ENCODE measurements at regions of chr12 and their contacts with region 1.

Region 1: DNA sequence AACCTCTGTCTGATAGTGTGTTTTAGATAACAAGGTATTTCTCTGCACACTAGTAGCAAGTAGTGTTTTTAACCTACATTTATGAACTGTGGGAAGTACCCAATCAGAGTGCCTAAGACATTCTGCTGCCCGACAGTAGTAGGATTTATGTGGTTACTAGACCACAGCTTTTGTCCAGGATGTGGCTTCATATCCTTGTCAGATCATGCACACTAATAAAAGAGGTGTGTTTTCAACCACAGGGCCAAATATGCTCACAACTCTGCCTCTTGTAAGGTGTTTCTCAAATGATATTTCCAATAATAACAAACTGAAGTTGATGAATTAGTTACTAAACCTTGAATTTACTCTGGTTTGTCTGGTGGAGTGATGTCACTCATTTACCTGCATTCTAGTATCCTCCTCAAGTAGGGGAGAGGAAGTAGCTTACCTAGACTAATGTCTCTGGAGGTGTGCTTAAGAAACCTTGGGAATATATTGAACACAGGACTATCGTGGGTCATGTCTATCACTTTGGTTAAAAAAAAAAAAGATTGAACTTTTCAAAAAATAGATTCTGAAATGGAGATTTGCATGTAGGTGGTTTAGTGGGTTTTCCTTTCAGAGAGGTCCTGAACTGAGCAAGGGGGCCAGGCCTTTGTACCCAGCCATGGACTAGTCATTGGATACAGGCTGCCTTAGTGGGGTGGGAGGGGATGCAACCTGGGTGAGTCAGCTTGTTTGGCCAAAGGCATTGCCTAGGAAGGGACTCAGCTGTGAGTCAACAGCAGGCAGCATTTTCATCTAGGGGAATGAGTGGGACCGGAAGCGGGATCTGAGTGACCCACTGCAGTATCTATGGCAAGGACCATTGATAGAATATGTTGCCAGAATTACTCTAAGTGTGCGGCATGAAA is 14.1 kb downstream of the FBXW8 start:
- DNase-seq: peak in 8 of 9 donors; percentile 46 to 86 (median 80)
- ATAC-seq: peak; percentile 96
- H3K4me3 ChIP-seq: peak overlapping the region; percentile 21
- H3K4me3 Mint-ChIP-seq: peak overlapping the region; percentile 27 to 82 (median 77)
- H3K27ac ChIP-seq: no peak overlapping the region
- H3K27ac Mint-ChIP-seq: peak overlapping the region; percentile 40 to 82 (median 62)
- H3K4me1 ChIP-seq: peaks cover 26 to 59% of the 10 kb centered on the region in 2 donors
- H3K4me1 Mint-ChIP-seq: peaks cover 51 to 86% (median 70%) of the 10 kb centered on the region in 7 donors
- H3K27me3 ChIP-seq: no peaks in the 10 kb centered on the region
- H3K27me3 Mint-ChIP-seq: peaks cover 0 to 8% (median 0%) of the 10 kb centered on the region in 5 donors

Region 2: DNA sequence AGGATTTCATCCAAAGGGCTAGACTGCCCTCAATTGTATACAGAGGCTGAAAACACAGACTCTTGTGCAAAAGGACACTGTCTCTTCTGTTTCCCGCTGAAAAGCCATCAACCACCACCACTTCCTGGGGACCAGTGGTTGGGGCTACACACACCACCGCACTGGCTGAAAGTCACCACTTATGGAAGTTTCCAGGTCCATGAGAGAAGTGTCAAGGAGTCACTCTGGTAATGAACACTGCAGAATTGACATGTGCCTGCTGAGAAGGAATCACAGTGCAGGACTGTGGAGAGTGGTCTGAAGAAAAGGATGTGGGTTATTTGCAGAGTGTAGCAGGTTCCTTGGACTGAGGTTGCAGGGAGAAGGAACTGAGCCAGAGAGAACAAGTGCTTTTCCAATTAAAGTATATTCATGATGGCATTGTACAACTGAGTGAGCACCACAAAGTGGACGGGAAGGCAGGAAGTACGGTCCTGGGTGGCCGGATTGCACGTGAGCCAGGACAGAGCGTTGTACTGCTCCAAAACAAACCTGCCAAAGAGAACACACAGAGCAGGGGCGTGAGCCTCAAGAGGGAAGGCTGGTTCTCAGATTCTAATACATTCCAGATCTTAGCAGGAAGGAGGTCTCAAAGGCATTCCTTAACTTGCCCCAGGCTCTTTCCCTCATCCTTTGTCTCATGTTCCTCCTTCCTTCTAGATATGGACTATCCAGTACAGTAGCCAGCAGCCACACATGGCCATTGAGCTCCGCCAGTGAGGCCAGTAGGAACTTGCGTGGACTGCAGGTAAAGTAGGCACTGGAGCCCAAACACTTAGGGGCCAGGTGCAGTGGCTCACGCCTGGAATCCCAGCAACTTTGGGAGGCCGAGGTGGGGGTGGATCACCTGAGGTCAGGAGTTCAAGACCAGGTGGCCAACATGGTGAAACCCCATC is 963.7 kb before region 1 on chr12:
- CTCF ChIA-PET with region 1: no interaction called
- POLR2A ChIA-PET with region 1: no interaction called
- intact Hi-C with region 1: loop called in 1 of 2 experiments (anchors 10 kb)
- DNase-seq: peak in 1 of 9 donors; percentile 32
- ATAC-seq: no peak
- H3K4me3 ChIP-seq: no peak overlapping the region
- H3K4me3 Mint-ChIP-seq: peak overlapping the region in 2 of 10 donors; percentile 5 to 10
- H3K27ac ChIP-seq: no peak overlapping the region
- H3K27ac Mint-ChIP-seq: peak overlapping the region in 4 of 9 donors; percentile 29 to 76 (median 72)
- H3K4me1 ChIP-seq: no peaks in the 10 kb centered on the region
- H3K4me1 Mint-ChIP-seq: peaks cover 0 to 59% (median 0%) of the 10 kb centered on the region in 7 donors
- H3K27me3 ChIP-seq: no peaks in the 10 kb centered on the region
- H3K27me3 Mint-ChIP-seq: no peaks in the 10 kb centered on the region

Region 3: DNA sequence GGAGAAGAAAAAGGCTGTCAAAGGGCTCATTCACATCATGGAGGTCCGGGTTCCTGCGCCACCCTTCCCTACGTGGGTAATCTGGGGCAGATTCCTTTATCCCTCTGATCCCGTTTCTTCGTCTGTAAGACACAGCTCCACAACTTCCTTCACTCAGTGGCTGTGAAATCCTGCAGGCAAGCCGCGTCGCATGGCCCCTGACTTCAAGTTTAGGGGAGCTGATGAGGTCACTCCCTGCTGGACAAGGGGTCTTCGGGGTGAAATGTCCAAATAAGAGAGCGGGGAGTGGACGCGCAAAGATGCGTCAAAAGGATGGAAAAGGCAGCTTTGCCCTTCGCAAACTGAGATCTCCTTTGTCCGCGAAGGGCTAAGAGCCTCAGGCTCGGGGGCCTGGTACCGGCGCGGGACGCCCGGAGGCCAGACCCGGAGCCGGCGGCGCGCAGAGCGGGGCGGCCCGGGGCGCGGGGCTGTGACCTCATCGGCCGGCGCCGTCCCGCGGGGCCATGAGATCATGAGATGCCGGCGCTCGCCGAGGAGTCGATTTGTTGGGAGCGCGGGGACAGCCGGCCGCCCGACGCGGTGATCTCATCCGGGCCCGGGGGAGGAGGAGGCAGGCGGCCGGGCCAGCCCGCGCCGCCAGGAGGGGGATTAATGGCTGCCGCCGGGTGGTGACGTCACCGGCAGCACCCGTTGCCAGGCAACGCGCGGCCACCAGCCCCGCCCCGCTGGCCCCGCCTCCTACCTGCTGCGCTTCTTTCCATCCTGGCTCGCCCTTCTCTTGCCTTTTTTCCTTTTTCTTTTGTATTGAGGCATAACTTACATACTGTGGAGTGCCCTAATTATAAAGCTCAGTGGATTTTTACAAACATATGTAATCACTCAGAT is 105.6 kb before region 1 on chr12:
- CTCF ChIA-PET with region 1: no interaction called
- POLR2A ChIA-PET with region 1: no interaction called
- intact Hi-C with region 1: loop called (anchors 1 to 2 kb)
- DNase-seq: peak; percentile 86 to 94 (median 91)
- ATAC-seq: peak; percentile 90
- H3K4me3 ChIP-seq: peak overlapping the region; percentile 99
- H3K4me3 Mint-ChIP-seq: peak overlapping the region; percentile 78 to 99 (median 94)
- H3K27ac ChIP-seq: peak overlapping the region; percentile 97
- H3K27ac Mint-ChIP-seq: peak overlapping the region; percentile 87 to 99 (median 96)
- H3K4me1 ChIP-seq: peaks cover 7 to 11% of the 10 kb centered on the region in 2 donors
- H3K4me1 Mint-ChIP-seq: peaks cover 12 to 31% (median 24%) of the 10 kb centered on the region in 7 donors
- H3K27me3 ChIP-seq: no peaks in the 10 kb centered on the region
- H3K27me3 Mint-ChIP-seq: no peaks in the 10 kb centered on the region

Region 4: GRCh38 chr12:116910645-116911451 is 14.0 kb before region 1 on chr12 and contains the start of gene FBXW8:
- CTCF ChIA-PET with region 1: no interaction called
- POLR2A ChIA-PET with region 1: interaction called, 4 read pairs
- intact Hi-C with region 1: loop called (anchors 1 kb)
- DNase-seq: peak; percentile 23 to 73 (median 44)
- ATAC-seq: peak; percentile 92
- H3K4me3 ChIP-seq: peak within 1 kb of the TSS; percentile 65
- H3K4me3 Mint-ChIP-seq: peak within 1 kb of the TSS; percentile 89 to 97 (median 93)
- H3K27ac ChIP-seq: peak within 1 kb of the TSS; percentile 61
- H3K27ac Mint-ChIP-seq: peak within 1 kb of the TSS; percentile 65 to 91 (median 83)
- H3K4me1 ChIP-seq: peaks cover 0 to 6% of the 10 kb centered on the region in 2 donors
- H3K4me1 Mint-ChIP-seq: peaks cover 21 to 48% (median 39%) of the 10 kb centered on the region in 7 donors
- H3K27me3 ChIP-seq: no peaks in the 10 kb centered on the region
- H3K27me3 Mint-ChIP-seq: peaks cover 0 to 30% (median 0%) of the 10 kb centered on the region in 5 donors
- total RNA-seq, gene FBXW8: 10.8 to 13.2 (median 12.6) TPM

Region 5: DNA sequence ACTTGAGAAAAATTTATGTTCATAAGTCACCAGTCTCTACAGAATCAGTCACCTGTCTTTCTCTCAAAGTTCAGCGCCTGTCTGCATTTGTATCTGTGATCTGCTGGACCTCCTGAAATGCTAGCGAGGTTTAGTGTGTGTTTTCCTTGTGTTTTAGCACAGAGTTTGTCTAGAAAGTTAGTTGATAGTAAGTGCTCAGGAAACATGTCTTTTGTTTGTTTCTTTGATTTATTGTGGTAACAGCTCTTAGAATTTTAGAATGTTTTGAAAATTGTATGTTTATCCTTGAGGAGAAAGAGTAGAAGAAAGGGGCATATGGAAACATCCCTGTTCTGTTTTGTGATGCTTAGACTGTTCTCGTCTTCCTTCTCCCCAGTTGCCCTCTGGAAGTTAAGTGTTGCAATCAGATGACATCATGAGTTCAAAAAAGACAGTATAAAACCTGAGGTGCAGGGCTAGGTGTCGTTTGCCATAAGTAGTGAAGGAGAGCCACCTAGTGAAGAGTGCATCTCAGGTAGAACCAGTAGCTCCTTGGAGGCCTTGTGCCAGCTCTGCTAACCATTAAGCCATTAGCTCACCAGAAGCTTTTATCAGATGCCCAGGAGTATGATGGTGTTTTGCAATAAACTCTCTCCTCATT is 30.7 kb after region 1 on chr12:
- CTCF ChIA-PET with region 1: no interaction called
- POLR2A ChIA-PET with region 1: no interaction called
- intact Hi-C with region 1: loop called in 1 of 2 experiments (anchors 1 kb)
- DNase-seq: peak in 7 of 9 donors; percentile 21 to 49 (median 34)
- ATAC-seq: peak; percentile 60
- H3K4me3 ChIP-seq: no peak overlapping the region
- H3K4me3 Mint-ChIP-seq: no peak overlapping the region
- H3K27ac ChIP-seq: no peak overlapping the region
- H3K27ac Mint-ChIP-seq: peak overlapping the region in 1 of 9 donors; percentile 51
- H3K4me1 ChIP-seq: peaks cover 0 to 4% of the 10 kb centered on the region in 2 donors
- H3K4me1 Mint-ChIP-seq: peaks cover 4 to 24% (median 8%) of the 10 kb centered on the region in 7 donors
- H3K27me3 ChIP-seq: no peaks in the 10 kb centered on the region
- H3K27me3 Mint-ChIP-seq: no peaks in the 10 kb centered on the region

Region 6: DNA sequence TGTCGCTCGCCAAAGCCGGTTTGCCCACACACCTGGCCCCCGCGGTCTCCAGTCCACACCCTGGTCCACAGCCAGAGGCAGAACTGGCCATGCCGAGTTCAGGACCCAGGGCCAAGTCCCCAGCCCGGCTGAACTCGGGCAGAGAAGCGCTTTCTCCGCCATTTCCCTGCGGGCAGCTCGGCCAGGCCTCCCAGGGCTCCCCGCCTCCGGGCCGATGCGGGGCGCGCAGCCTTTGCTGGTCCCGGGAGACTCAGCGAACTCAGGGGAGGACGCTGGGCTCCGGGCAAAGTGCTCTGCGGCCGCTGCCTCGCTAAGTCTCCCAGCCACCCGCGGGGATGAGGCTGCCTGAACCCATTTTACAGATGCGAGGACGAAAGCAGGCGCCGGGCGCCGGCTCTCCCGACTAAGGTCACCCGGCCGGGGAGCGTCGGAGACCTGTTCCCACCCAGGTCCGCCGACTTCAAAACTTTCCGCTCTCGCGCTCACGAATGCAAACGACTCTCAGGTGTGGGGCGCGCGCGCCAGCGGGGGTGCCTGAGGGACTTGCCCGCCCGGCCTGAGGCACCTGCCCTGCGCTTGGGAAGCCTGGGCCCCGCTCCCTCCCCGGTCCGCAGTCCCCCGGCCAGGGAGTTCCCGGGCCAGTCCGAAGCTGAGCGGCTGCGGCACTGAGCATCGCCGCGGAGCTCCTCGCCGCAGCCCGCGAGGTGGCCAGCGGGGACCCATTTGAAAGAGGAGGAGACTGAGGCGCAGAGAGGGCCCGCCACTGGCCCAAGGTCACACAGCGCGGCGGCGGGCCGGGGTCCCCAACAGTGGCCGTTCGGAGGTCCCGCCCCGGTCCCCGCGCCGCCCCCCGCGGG is 173.8 kb after region 1 on chr12:
- CTCF ChIA-PET with region 1: no interaction called
- POLR2A ChIA-PET with region 1: no interaction called
- intact Hi-C with region 1: loop called in 1 of 2 experiments (anchors 2 kb)
- DNase-seq: peak in 3 of 9 donors; percentile 8 to 11 (median 11)
- ATAC-seq: peak; percentile 30
- H3K4me3 ChIP-seq: peak overlapping the region; percentile 56
- H3K4me3 Mint-ChIP-seq: peak overlapping the region; percentile 68 to 85 (median 79)
- H3K27ac ChIP-seq: no peak overlapping the region
- H3K27ac Mint-ChIP-seq: peak overlapping the region in 1 of 9 donors; percentile 23
- H3K4me1 ChIP-seq: peaks cover 4 to 5% of the 10 kb centered on the region in 2 donors
- H3K4me1 Mint-ChIP-seq: peaks cover 0 to 27% (median 9%) of the 10 kb centered on the region in 7 donors
- H3K27me3 ChIP-seq: peaks cover 0 to 10% of the 10 kb centered on the region in 2 donors
- H3K27me3 Mint-ChIP-seq: peaks cover 16 to 37% (median 21%) of the 10 kb centered on the region in 5 donors

Measured in naive thymus-derived CD4-positive, alpha-beta T cell (primary cell).